Naive thymus-derived CD4-positive, alpha-beta T cell (primary cell): ENCODE measurements at regions of chr1 and their contacts with region 1.

Region 1: DNA sequence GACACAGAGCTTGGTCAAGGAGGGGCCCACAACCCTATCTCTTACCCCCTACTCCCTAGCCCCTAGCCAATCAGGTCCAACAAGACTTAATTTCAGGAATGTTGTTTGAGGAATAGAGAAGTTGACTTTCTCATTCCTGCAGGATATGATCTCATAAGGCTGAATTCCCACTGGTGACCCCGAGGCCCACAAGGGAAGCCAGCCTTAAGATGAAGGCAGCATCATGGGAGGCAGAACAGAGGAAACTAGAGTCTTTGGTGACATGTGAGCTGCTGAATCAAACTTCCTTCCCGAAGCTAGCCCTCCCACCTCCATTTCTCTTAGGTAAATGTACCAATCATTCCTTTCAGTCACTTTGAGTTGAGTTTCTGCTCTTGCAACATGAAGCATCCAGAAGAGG is 9.1 kb upstream of the PDIK1L start:
- DNase-seq: no peak
- ATAC-seq: no peak
- H3K4me3 ChIP-seq: no peak overlapping the region
- H3K4me3 Mint-ChIP-seq: no peak overlapping the region
- H3K27ac ChIP-seq: no peak overlapping the region
- H3K27ac Mint-ChIP-seq: no peak overlapping the region
- H3K4me1 ChIP-seq: no peaks in the 10 kb centered on the region
- H3K4me1 Mint-ChIP-seq: peaks cover 0 to 13% (median 6%) of the 10 kb centered on the region in 7 donors
- H3K27me3 ChIP-seq: no peaks in the 10 kb centered on the region
- H3K27me3 Mint-ChIP-seq: peaks cover 0 to 27% (median 0%) of the 10 kb centered on the region in 5 donors

Region 2: GRCh38 chr1:26138974-26139558 is 36.5 kb after region 1 on chr1:
- CTCF ChIA-PET with region 1: interaction called, 145 read pairs
- POLR2A ChIA-PET with region 1: interaction called, 11 read pairs
- intact Hi-C with region 1: no loop called
- DNase-seq: peak in 2 of 9 donors; percentile 17 to 26
- ATAC-seq: peak; percentile 44
- H3K4me3 ChIP-seq: no peak overlapping the region
- H3K4me3 Mint-ChIP-seq: peak overlapping the region in 9 of 10 donors; percentile 22 to 71 (median 37)
- H3K27ac ChIP-seq: peak overlapping the region; percentile 44
- H3K27ac Mint-ChIP-seq: peak overlapping the region in 6 of 9 donors; percentile 1 to 86 (median 51)
- H3K4me1 ChIP-seq: peaks cover 0 to 8% of the 10 kb centered on the region in 2 donors
- H3K4me1 Mint-ChIP-seq: peaks cover 6 to 17% (median 10%) of the 10 kb centered on the region in 7 donors
- H3K27me3 ChIP-seq: no peaks in the 10 kb centered on the region
- H3K27me3 Mint-ChIP-seq: peaks cover 0 to 7% (median 0%) of the 10 kb centered on the region in 5 donors

Region 3: GRCh38 chr1:26161415-26162219 is 59.1 kb after region 1 on chr1:
- CTCF ChIA-PET with region 1: interaction called, 5 read pairs
- POLR2A ChIA-PET with region 1: no interaction called
- intact Hi-C with region 1: loop called in 1 of 2 experiments (anchors 1 kb)
- DNase-seq: peak in 7 of 9 donors; percentile 28 to 59 (median 38)
- ATAC-seq: peak; percentile 66
- H3K4me3 ChIP-seq: peak overlapping the region; percentile 30
- H3K4me3 Mint-ChIP-seq: peak overlapping the region in 9 of 10 donors; percentile 45 to 80 (median 66)
- H3K27ac ChIP-seq: no peak overlapping the region
- H3K27ac Mint-ChIP-seq: no peak overlapping the region
- H3K4me1 ChIP-seq: no peaks in the 10 kb centered on the region
- H3K4me1 Mint-ChIP-seq: peaks cover 0 to 32% (median 11%) of the 10 kb centered on the region in 7 donors
- H3K27me3 ChIP-seq: peaks cover 0 to 11% of the 10 kb centered on the region in 2 donors
- H3K27me3 Mint-ChIP-seq: peaks cover 16 to 61% (median 28%) of the 10 kb centered on the region in 5 donors